Posterior vena cava (tissue), 2 donors: ENCODE measurements at regions of chr18 and their contacts with region 1.

Region 1: GRCh38 chr18:53739700-53740099 is 484.8 kb downstream of the MBD2 start:
- DNase-seq: no peak

Region 2: GRCh38 chr18:53757328-53757727 is 17.6 kb after region 1 on chr18:
- intact Hi-C with region 1: loop called in 1 of 2 experiments (anchors 1 kb)
- DNase-seq: no peak